Mammary epithelial cell (primary cell): ENCODE measurements at regions of chr19 and their contacts with region 1.

Region 1: DNA sequence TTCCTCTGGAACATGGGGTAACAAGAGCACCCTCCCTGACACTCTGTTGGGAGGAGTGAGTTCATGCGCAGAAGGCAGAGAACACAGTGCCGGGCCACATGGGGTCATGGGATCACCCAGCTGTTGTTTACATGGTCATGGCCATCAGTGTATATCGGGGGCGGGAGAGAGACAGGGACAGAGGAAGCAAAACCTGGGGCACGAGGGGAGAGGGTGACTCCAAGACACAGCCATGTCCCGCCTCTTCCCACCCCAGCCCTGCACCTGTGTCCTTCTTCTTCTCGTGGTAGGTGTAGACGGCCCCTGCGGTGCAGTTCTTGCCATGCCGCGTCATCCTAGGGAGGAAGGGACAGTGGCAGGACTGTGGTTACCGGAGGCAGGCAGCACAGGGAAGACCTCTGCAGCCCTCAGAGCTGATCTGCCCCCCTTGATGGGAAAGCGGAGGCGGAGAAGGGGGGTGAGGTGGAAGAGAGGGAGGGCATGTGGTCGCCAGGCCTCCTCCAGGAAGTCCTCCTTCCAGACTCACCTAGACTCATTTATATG is 19.9 kb downstream of the NOSIP start:
- DNase-seq: no peak
- H3K4me3 ChIP-seq: no peak overlapping the region
- H3K27ac ChIP-seq: no peak overlapping the region
- H3K4me1 ChIP-seq: no peaks in the 10 kb centered on the region
- H3K27me3 ChIP-seq: no peaks in the 10 kb centered on the region
- CTCF ChIP-seq: no peak

Region 2: GRCh38 chr19:49473868-49474544 is 86.4 kb before region 1 on chr19 and contains the start of gene FLT3LG:
- CTCF ChIA-PET with region 1: no interaction called
- dilution Hi-C with region 1: loop called (anchors 5 kb)
- in situ Hi-C with region 1: no loop called
- intact Hi-C with region 1: no loop called
- DNase-seq: peak; percentile 55
- H3K4me3 ChIP-seq: peak within 1 kb of the TSS; percentile 63 to 76 (median 72)
- H3K27ac ChIP-seq: no peak within 1 kb of the TSS
- H3K4me1 ChIP-seq: peaks cover 8% of the 10 kb centered on the region
- H3K27me3 ChIP-seq: no peaks in the 10 kb centered on the region
- CTCF ChIP-seq: peak; percentile 78 to 98
- total RNA-seq, gene FLT3LG: 0.50 to 4.2 TPM

Region 3: DNA sequence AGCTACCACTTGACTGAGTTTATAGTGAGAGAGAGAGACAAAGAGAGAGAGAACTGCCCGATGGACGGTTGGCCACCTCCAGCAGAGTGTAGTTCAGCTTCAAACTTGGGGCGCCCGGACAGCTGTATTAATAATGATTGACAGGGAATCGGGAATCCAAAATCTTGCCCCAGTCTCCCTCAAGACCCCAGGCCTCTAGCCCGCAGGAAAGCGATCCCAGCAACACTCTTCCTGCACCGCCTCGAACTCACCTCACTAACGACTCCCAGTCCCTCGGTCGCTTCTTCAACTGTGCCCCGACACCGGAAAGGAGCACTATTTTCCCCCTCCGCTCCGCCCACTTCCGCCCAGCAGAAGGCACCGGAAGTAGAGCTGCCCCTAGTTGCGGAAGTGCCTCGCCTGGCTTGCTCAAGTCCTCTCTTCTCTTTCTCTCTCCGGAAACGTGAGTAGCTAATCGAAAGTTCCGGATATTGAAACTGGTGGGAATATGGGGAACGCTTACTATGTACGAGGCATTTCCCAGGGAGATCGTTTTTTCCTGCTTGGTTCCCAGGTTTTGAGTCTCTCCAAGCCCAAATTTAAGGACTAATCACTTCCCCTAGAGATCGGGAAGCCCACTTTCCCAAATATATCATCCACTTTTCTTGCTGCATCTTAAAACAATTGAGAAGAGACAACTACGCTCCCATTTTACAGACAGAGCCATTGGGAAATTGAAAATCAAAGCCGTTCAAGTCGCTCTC is 20.0 kb after region 1 on chr19 and contains the start of gene NOSIP:
- CTCF ChIA-PET with region 1: no interaction called
- dilution Hi-C with region 1: no loop called
- in situ Hi-C with region 1: no loop called
- intact Hi-C with region 1: no loop called
- DNase-seq: peak; percentile 93
- H3K4me3 ChIP-seq: peak within 1 kb of the TSS; percentile 65 to 94 (median 81)
- H3K27ac ChIP-seq: peak within 1 kb of the TSS; percentile 58
- H3K4me1 ChIP-seq: peaks cover 20% of the 10 kb centered on the region
- H3K27me3 ChIP-seq: no peaks in the 10 kb centered on the region
- CTCF ChIP-seq: no peak
- total RNA-seq, gene NOSIP: 43.6 to 50.7 TPM